ENCODE measurements at regions of chr19 and their contacts with region 1.

Region 1: GRCh38 chr19:19192078-19192882 is at the starts of genes BORCS8 and RFXANK:
- DNase-seq: peak; percentile 99
- ATAC-seq: peak; percentile 90
- H3K4me3 ChIP-seq: peak within 1 kb of the TSS; percentile 69 to 99 (median 93)
- H3K4me3 Mint-ChIP-seq: peak within 1 kb of the TSS; percentile 97
- H3K27ac ChIP-seq: peak within 1 kb of the TSS; percentile 99 to 100
- H3K27ac Mint-ChIP-seq: peak within 1 kb of the TSS; percentile 98
- H3K4me1 ChIP-seq: peaks cover 28 to 42% of the 10 kb centered on the region in 2 donors
- H3K4me1 Mint-ChIP-seq: peaks cover 48% of the 10 kb centered on the region
- H3K27me3 ChIP-seq: no peaks in the 10 kb centered on the region
- H3K27me3 Mint-ChIP-seq: no peaks in the 10 kb centered on the region
- CTCF ChIP-seq: no peak
- total RNA-seq, gene BORCS8: 62.3 and 63.1 TPM in 2 replicates
- total RNA-seq, gene RFXANK: 77.9 and 80.7 TPM in 2 replicates

Region 2: GRCh38 chr19:17405250-17406038 is 1786.8 kb before region 1 on chr19 and contains the start of gene BST2:
- CTCF ChIA-PET with region 1: no interaction called
- POLR2A ChIA-PET with region 1: interaction called, 14 read pairs
- intact Hi-C with region 1: no loop called
- DNase-seq: peak; percentile 81
- ATAC-seq: peak; percentile 91
- H3K4me3 ChIP-seq: peak within 1 kb of the TSS; percentile 62 to 95 (median 75)
- H3K4me3 Mint-ChIP-seq: peak within 1 kb of the TSS; percentile 85
- H3K27ac ChIP-seq: peak within 1 kb of the TSS; percentile 72 to 86
- H3K27ac Mint-ChIP-seq: peak within 1 kb of the TSS; percentile 86
- H3K4me1 ChIP-seq: peaks cover 26 to 45% of the 10 kb centered on the region in 2 donors
- H3K4me1 Mint-ChIP-seq: peaks cover 42% of the 10 kb centered on the region
- H3K27me3 ChIP-seq: no peaks in the 10 kb centered on the region
- H3K27me3 Mint-ChIP-seq: no peaks in the 10 kb centered on the region
- CTCF ChIP-seq: no peak
- total RNA-seq, gene BST2: 59.7 and 66.0 TPM in 2 replicates

Region 3: DNA sequence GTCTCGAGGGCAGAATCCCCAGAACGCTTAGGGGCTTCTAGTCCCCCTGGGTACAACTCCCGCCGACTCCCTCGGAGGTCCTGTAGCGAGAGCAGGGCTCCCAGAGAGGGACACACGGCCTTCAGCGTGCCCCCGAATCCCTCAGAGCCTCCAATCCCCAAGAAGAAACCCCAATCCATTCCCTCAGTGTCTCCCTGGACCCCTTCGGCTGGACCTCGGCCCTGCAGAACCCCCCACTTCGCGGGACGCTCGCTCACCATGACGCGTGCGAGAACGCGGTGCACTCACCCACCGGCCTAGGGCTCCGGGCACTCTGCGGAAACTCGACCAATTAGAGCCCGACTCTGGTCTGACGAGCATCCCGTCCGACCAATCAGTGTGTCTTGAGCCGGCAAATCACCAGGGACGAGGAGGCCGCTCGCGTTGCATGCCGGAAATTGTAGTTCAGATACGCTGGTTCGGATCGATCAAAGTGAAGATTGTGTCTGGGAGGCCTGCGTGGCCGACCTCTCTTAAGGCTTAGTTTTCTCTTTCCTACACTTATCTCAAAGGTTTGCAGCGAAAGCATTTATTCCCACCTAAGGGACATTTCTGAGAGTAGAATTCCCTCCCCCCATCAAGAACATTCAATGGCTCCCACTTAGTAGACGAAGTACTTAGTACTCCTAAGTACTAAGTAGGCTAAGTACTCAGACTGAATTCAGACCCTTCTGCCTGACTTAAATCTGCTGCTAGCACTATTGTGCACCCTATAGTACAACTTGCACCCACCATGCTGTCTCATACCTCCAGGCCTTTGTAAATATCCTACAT is 53.9 kb before region 1 on chr19 and contains the start of gene TMEM161A:
- CTCF ChIA-PET with region 1: interaction called, 3 read pairs
- POLR2A ChIA-PET with region 1: no interaction called
- intact Hi-C with region 1: loop called (anchors 1 kb)
- DNase-seq: peak; percentile 96
- ATAC-seq: peak; percentile 100
- H3K4me3 ChIP-seq: peak within 1 kb of the TSS; percentile 78 to 90 (median 86)
- H3K4me3 Mint-ChIP-seq: peak within 1 kb of the TSS; percentile 97
- H3K27ac ChIP-seq: peak within 1 kb of the TSS; percentile 29 to 70
- H3K27ac Mint-ChIP-seq: peak within 1 kb of the TSS; percentile 93
- H3K4me1 ChIP-seq: peaks cover 15 to 26% of the 10 kb centered on the region in 2 donors
- H3K4me1 Mint-ChIP-seq: peaks cover 41% of the 10 kb centered on the region
- H3K27me3 ChIP-seq: no peaks in the 10 kb centered on the region
- H3K27me3 Mint-ChIP-seq: no peaks in the 10 kb centered on the region
- CTCF ChIP-seq: no peak
- total RNA-seq, gene TMEM161A: 23.2 and 23.6 TPM in 2 replicates

Region 4: GRCh38 chr19:19203012-19203856 is 11.0 kb after region 1 on chr19 and contains the start of gene NR2C2AP:
- CTCF ChIA-PET with region 1: interaction called, 3 read pairs
- POLR2A ChIA-PET with region 1: interaction called, 14 read pairs
- intact Hi-C with region 1: loop called (anchors 1 kb)
- DNase-seq: peak; percentile 93
- ATAC-seq: peak; percentile 94
- H3K4me3 ChIP-seq: peak within 1 kb of the TSS; percentile 71 to 91 (median 81)
- H3K4me3 Mint-ChIP-seq: peak within 1 kb of the TSS; percentile 92
- H3K27ac ChIP-seq: peak within 1 kb of the TSS; percentile 57 to 85
- H3K27ac Mint-ChIP-seq: peak within 1 kb of the TSS; percentile 91
- H3K4me1 ChIP-seq: peaks cover 23 to 33% of the 10 kb centered on the region in 2 donors
- H3K4me1 Mint-ChIP-seq: peaks cover 30% of the 10 kb centered on the region
- H3K27me3 ChIP-seq: peaks cover 0 to 11% (median 2%) of the 10 kb centered on the region in 4 experiments
- H3K27me3 Mint-ChIP-seq: peaks cover 9% of the 10 kb centered on the region
- CTCF ChIP-seq: no peak
- total RNA-seq, gene NR2C2AP: 27.1 and 29.3 TPM in 2 replicates

Region 5: DNA sequence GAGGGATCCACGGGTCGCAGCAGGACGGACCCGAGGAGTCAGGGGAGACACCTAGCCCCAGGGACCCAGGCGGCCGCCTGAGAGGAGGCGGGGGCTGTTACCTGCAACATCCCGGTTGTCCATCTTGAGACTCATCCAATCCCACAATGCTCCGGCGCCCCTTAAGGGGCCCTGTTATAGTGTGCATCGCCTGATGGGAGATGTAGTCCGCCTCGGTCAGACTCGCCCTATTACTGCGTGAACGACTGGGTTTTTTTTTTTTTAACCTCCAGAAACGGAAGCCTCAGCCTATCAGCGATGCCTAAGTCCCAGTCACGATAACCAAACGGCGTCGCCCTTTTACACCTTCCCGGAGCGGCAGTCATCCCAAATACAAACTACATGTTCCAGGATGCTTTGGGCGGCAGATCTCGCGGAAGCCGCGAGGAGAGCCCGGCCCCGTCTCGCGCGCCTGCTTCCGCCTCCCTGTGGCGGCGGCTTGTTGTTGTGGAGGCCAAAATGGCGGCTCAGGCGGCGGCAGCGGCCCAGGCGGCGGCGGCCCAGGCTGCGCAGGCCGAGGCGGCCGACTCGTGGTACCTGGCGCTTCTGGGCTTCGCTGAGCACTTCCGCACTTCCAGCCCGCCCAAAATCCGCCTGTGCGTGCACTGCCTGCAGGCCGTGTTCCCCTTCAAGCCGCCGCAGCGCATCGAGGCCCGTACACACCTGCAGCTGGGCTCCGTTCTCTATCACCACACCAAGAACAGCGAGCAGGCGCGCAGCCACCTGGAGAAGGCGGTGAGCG is 128.3 kb after region 1 on chr19 and contains the starts of genes MAU2 and SUGP1:
- CTCF ChIA-PET with region 1: no interaction called
- POLR2A ChIA-PET with region 1: interaction called, 4 read pairs
- intact Hi-C with region 1: loop called (anchors 1 kb)
- DNase-seq: peak; percentile 95
- ATAC-seq: peak; percentile 91
- H3K4me3 ChIP-seq: peak within 1 kb of the TSS; percentile 73 to 97 (median 79)
- H3K4me3 Mint-ChIP-seq: peak within 1 kb of the TSS; percentile 96
- H3K27ac ChIP-seq: peak within 1 kb of the TSS; percentile 96
- H3K27ac Mint-ChIP-seq: peak within 1 kb of the TSS; percentile 99
- H3K4me1 ChIP-seq: peaks cover 18 to 31% of the 10 kb centered on the region in 2 donors
- H3K4me1 Mint-ChIP-seq: peaks cover 44% of the 10 kb centered on the region
- H3K27me3 ChIP-seq: no peaks in the 10 kb centered on the region
- H3K27me3 Mint-ChIP-seq: no peaks in the 10 kb centered on the region
- CTCF ChIP-seq: peak; percentile 26
- total RNA-seq, gene MAU2: 199 and 203 TPM in 2 replicates
- total RNA-seq, gene SUGP1: 86.9 and 91.4 TPM in 2 replicates

Region 6: GRCh38 chr19:19732579-19733501 is 540.6 kb after region 1 on chr19 and contains the start of gene ZNF14:
- CTCF ChIA-PET with region 1: no interaction called
- POLR2A ChIA-PET with region 1: no interaction called
- intact Hi-C with region 1: loop called (anchors 5 kb)
- DNase-seq: peak; percentile 94
- ATAC-seq: peak; percentile 100
- H3K4me3 ChIP-seq: peak within 1 kb of the TSS; percentile 59 to 95 (median 94)
- H3K4me3 Mint-ChIP-seq: peak within 1 kb of the TSS; percentile 99
- H3K27ac ChIP-seq: peak within 1 kb of the TSS; percentile 49 to 76
- H3K27ac Mint-ChIP-seq: peak within 1 kb of the TSS; percentile 96
- H3K4me1 ChIP-seq: peaks cover 11 to 17% of the 10 kb centered on the region in 2 donors
- H3K4me1 Mint-ChIP-seq: peaks cover 27% of the 10 kb centered on the region
- H3K27me3 ChIP-seq: no peaks in the 10 kb centered on the region
- H3K27me3 Mint-ChIP-seq: no peaks in the 10 kb centered on the region
- CTCF ChIP-seq: no peak
- total RNA-seq, gene ZNF14: 21.0 and 22.5 TPM in 2 replicates

Measured in B cell (primary cell).